H1 (cell line): ENCODE measurements at regions of chr17 and their contacts with region 1.

Region 1: DNA sequence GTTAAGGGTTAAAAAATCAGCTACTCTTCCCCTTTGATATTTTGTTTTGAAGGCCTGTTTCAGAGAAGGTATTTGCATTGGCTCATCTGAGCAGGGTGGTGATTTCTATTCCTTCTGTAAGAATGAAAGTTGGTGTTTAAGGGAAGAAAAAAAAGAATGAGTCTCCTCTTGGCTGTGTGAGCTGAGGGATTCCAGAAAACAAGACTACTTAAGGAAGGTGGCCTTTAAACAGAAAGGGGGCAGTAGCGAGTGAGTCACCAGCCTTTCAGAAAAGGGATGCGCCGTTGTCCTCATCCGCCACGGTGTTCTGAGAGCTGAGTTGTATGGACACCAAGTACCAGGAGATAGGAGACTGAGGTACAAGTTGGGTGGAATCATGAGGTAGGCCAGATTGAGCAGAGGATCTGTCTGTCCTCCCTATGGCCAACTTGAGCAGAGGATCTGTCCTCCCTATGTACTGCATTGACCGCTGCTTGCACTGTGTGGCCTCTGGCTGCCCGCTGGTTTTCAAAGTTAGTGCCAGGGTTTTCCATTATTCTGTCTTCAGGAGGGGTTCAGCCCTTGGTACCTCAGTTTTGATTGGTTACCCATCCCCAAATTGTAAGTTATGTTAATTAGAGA is 8.2 kb downstream of the PRKCA start:
- DNase-seq: peak in 1 of 2 experiments; percentile 57
- H3K4me3 ChIP-seq: no peak overlapping the region
- H3K27ac ChIP-seq: no peak overlapping the region
- H3K4me1 ChIP-seq: peaks cover 2 to 12% (median 6%) of the 10 kb centered on the region in 4 experiments; a peak in 5 of 7 replicates
- H3K27me3 ChIP-seq: no peaks in the 10 kb centered on the region
- CTCF ChIP-seq: peak; percentile 51 to 74 (median 52)
- EP300 ChIP-seq: no peak
- POLR2A ChIP-seq: no peak
- RAD21 ChIP-seq: peak; percentile 54 to 66

Region 2: GRCh38 chr17:66326476-66327047 is 15.9 kb after region 1 on chr17:
- CTCF ChIA-PET with region 1: interaction called, 16 read pairs
- POLR2A ChIA-PET with region 1: no interaction called
- DNase-seq: no peak
- H3K4me3 ChIP-seq: no peak overlapping the region
- H3K27ac ChIP-seq: no peak overlapping the region
- H3K4me1 ChIP-seq: no peaks in the 10 kb centered on the region
- H3K27me3 ChIP-seq: no peaks in the 10 kb centered on the region
- CTCF ChIP-seq: no peak
- EP300 ChIP-seq: no peak
- POLR2A ChIP-seq: no peak
- RAD21 ChIP-seq: no peak